Panc1 (cell line): ENCODE measurements at regions of chr3 and their contacts with region 1.

Region 1: GRCh38 chr3:175046601-175047000 is 187.5 kb downstream of the NAALADL2 start:
- DNase-seq: no peak
- ATAC-seq: no peak
- H3K4me3 ChIP-seq: no peak overlapping the region
- H3K27ac ChIP-seq: no peak overlapping the region
- H3K4me1 ChIP-seq: no peaks in the 10 kb centered on the region
- H3K27me3 ChIP-seq: no peaks in the 10 kb centered on the region
- CTCF ChIP-seq: no peak

Region 2: GRCh38 chr3:174710612-174711011 is 336.0 kb before region 1 on chr3:
- CTCF ChIA-PET with region 1: no interaction called
- POLR2A ChIA-PET with region 1: no interaction called
- in situ Hi-C with region 1: no loop called
- intact Hi-C with region 1: no loop called
- DNase-seq: no peak
- ATAC-seq: no peak
- H3K4me3 ChIP-seq: no peak overlapping the region
- H3K27ac ChIP-seq: no peak overlapping the region
- H3K4me1 ChIP-seq: no peaks in the 10 kb centered on the region
- H3K27me3 ChIP-seq: no peaks in the 10 kb centered on the region
- CTCF ChIP-seq: no peak

Region 3: GRCh38 chr3:175948041-175948440 is 901.4 kb after region 1 on chr3:
- CTCF ChIA-PET with region 1: interaction called, 10 read pairs
- POLR2A ChIA-PET with region 1: no interaction called
- in situ Hi-C with region 1: no loop called
- intact Hi-C with region 1: no loop called
- DNase-seq: no peak
- ATAC-seq: no peak
- H3K4me3 ChIP-seq: no peak overlapping the region
- H3K27ac ChIP-seq: no peak overlapping the region
- H3K4me1 ChIP-seq: no peaks in the 10 kb centered on the region
- H3K27me3 ChIP-seq: no peaks in the 10 kb centered on the region
- CTCF ChIP-seq: no peak